ENCODE measurements at regions of chr5 and their contacts with region 1.

Region 1: DNA sequence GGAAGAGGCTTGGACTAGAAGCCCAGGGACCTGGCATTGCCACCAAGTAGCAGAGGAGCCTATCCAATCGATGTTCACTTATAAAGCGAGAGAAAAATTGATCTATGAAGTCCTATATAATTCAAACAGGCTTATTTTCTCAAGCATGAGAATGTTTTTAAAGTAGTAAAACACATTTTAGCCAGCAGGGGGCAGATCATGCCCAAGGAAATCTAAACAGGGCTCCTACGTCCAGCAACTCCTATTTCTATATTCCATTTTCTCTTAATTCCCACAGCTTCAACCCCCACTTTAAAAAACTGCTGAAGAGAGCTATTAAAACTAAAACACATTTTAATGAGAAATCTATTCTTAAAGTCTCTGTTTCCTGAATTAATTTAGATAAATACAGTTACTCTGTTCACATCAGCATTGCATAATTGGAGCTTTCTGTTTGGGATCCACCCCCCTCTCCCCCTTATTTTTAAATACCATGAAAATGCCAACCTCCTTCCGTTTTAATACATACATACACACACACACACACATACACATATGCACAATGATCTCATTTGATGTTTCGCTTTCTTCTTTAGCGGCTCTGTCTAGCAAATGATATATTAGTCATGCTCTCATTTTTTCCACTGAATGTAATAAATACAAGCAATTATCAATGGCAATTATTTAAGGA is 144.9 kb downstream of the MYO10 start:
- DNase-seq: peak; percentile 26
- H3K4me3 Mint-ChIP-seq: no peak overlapping the region
- H3K27ac Mint-ChIP-seq: no peak overlapping the region
- H3K4me1 Mint-ChIP-seq: peaks cover 7% of the 10 kb centered on the region
- H3K27me3 Mint-ChIP-seq: no peaks in the 10 kb centered on the region

Region 2: GRCh38 chr5:16489322-16489791 is 301.8 kb before region 1 on chr5:
- CTCF ChIA-PET with region 1: no interaction called
- intact Hi-C with region 1: loop called (anchors 2 kb)
- DNase-seq: no peak
- H3K4me3 Mint-ChIP-seq: no peak overlapping the region
- H3K27ac Mint-ChIP-seq: no peak overlapping the region
- H3K4me1 Mint-ChIP-seq: peaks cover 15% of the 10 kb centered on the region
- H3K27me3 Mint-ChIP-seq: no peaks in the 10 kb centered on the region

Region 3: DNA sequence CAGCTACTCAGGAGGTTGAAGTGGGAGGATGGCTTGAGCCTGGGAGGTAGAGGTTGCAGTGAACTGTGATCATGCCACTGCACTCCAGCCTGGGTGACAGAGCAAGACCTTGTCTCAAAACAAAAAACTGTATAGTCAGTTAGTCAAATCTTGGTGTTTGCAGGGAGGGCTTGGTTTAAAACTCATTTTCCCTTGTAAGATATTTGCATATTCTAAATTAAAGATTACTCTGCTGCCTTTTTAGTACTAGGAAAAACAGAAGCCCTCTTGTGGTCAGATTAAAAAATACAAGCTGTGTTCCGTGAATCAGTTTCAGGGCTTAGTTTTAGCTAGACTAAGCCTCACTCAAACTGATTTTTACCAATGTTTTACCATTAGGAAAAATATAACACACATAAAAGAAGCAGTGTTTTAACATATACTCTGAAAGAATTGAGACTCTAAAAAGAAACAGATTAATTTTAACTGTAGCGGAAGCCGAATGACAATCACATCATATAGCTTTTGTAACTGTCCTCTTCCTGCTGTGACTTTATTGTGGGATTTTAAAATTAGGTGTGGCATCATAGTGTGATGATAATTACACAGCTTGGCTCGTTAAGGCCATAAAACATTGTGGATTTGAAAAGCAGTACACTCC is 341.4 kb after region 1 on chr5:
- CTCF ChIA-PET with region 1: interaction called, 10 read pairs
- intact Hi-C with region 1: loop called (anchors 1 kb)
- DNase-seq: no peak
- H3K4me3 Mint-ChIP-seq: no peak overlapping the region
- H3K27ac Mint-ChIP-seq: no peak overlapping the region
- H3K4me1 Mint-ChIP-seq: peaks cover 6% of the 10 kb centered on the region
- H3K27me3 Mint-ChIP-seq: peaks cover 23% of the 10 kb centered on the region

Region 4: GRCh38 chr5:17204133-17204489 is 412.9 kb after region 1 on chr5:
- CTCF ChIA-PET with region 1: interaction called, 3 read pairs
- intact Hi-C with region 1: loop called (anchors 1 kb)
- DNase-seq: no peak
- H3K4me3 Mint-ChIP-seq: no peak overlapping the region
- H3K27ac Mint-ChIP-seq: no peak overlapping the region
- H3K4me1 Mint-ChIP-seq: no peaks in the 10 kb centered on the region
- H3K27me3 Mint-ChIP-seq: peaks cover 18% of the 10 kb centered on the region